Mammary epithelial cell (primary cell): ENCODE measurements at regions of chr11 and their contacts with region 1.

Region 1: GRCh38 chr11:12888525-12889158 is 120.5 kb upstream of the RASSF10 start:
- DNase-seq: peak; percentile 69
- H3K4me3 ChIP-seq: no peak overlapping the region
- H3K27ac ChIP-seq: no peak overlapping the region
- H3K4me1 ChIP-seq: peaks cover 16% of the 10 kb centered on the region
- H3K27me3 ChIP-seq: no peaks in the 10 kb centered on the region
- CTCF ChIP-seq: peak; percentile 69 to 77

Region 2: DNA sequence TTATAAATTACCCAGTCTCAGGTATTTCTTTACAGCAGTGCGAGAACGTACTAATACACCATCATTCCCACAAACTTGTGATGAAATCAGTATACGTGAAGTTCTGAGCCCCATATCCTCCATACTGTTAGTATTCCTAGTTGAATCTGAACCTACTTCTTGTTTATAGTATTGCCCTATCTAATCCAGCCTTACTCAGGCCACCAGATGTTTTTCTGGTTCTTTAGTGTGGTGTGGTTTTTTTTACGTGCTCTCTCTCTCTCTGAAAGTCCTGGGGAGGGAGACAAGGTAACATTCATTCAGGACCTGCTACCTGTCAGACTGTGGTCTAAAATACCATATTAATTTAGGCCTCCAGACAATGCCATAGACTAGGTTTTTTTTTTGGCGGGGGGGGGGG is 262.0 kb before region 1 on chr11:
- CTCF ChIA-PET with region 1: interaction called, 17 read pairs
- dilution Hi-C with region 1: no loop called
- in situ Hi-C with region 1: no loop called
- intact Hi-C with region 1: no loop called
- DNase-seq: no peak
- H3K4me3 ChIP-seq: no peak overlapping the region
- H3K27ac ChIP-seq: no peak overlapping the region
- H3K4me1 ChIP-seq: no peaks in the 10 kb centered on the region
- H3K27me3 ChIP-seq: no peaks in the 10 kb centered on the region
- CTCF ChIP-seq: no peak

Region 3: GRCh38 chr11:12813371-12814225 is 75.0 kb before region 1 on chr11:
- CTCF ChIA-PET with region 1: interaction called, 3 read pairs
- dilution Hi-C with region 1: no loop called
- in situ Hi-C with region 1: no loop called
- intact Hi-C with region 1: loop called (anchors 1 kb)
- DNase-seq: peak; percentile 78
- H3K4me3 ChIP-seq: no peak overlapping the region
- H3K27ac ChIP-seq: peak overlapping the region; percentile 1
- H3K4me1 ChIP-seq: peaks cover 71% of the 10 kb centered on the region
- H3K27me3 ChIP-seq: no peaks in the 10 kb centered on the region
- CTCF ChIP-seq: peak; percentile 18 to 56